PC-3 (cell line): ENCODE measurements at regions of chr9 and their contacts with region 1.

Region 1: GRCh38 chr9:5186416-5187169 is 1.2 kb upstream of the INSL6 start:
- DNase-seq: peak; percentile 71
- ATAC-seq: peak; percentile 83
- H3K4me3 ChIP-seq: no peak overlapping the region
- H3K27ac ChIP-seq: no peak overlapping the region
- H3K4me1 ChIP-seq: no peaks in the 10 kb centered on the region
- H3K27me3 ChIP-seq: no peaks in the 10 kb centered on the region
- CTCF ChIP-seq: peak; percentile 76

Region 2: DNA sequence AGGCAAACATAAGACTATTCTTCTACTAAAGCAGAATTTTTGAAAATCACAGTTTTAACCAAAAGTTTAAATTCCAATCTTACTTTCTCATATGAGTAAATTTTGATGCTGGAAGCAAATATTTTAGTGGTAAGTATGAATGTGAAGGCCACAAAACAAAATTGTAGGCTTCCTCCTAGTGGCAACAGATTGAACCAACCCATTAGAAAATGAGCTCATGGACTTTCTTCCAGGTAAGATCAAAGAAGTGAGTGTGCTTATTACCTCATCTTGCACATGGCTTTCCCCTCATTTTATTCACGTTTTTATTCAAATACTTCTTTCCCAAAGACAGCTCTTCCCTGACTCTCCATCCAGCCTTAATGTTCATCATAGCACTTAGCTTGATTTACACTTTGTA is 134.5 kb after region 1 on chr9:
- CTCF ChIA-PET with region 1: interaction called, 9 read pairs
- POLR2A ChIA-PET with region 1: no interaction called
- intact Hi-C with region 1: loop called (anchors 1 kb)
- DNase-seq: peak; percentile 29
- ATAC-seq: no peak
- H3K4me3 ChIP-seq: no peak overlapping the region
- H3K27ac ChIP-seq: no peak overlapping the region
- H3K4me1 ChIP-seq: no peaks in the 10 kb centered on the region
- H3K27me3 ChIP-seq: no peaks in the 10 kb centered on the region
- CTCF ChIP-seq: peak; percentile 41

Region 3: DNA sequence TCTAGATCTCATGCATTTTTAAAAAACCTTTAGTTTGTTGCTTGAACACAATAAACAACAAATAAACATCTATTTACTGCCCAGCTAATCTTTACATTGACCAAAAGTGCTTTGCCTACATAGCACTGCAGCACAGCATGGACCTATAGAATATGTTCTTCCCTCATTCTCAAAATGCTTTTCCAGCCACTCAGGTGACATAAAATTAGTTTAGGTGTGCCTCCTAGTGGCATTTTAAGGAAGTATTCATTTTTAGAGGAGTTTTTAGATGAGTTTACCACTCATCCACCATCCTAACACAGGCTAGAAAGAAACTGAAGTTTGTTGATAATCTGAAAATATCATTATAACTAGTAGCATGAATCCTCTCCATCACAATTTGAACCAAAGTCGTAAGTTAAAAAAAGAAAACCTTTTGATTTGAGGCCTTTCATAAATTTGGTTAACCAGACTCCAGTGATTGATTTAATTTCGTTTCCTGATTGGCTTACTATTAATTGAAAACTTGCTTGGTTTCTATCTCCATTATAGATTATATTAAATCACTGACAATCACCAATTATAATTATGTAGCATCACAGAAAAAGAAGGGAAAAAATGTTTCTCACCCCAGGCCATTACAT is 238.5 kb after region 1 on chr9:
- CTCF ChIA-PET with region 1: interaction called, 7 read pairs
- POLR2A ChIA-PET with region 1: no interaction called
- intact Hi-C with region 1: loop called (anchors 1 kb)
- DNase-seq: peak; percentile 63
- ATAC-seq: peak; percentile 38
- H3K4me3 ChIP-seq: no peak overlapping the region
- H3K27ac ChIP-seq: no peak overlapping the region
- H3K4me1 ChIP-seq: no peaks in the 10 kb centered on the region
- H3K27me3 ChIP-seq: no peaks in the 10 kb centered on the region
- CTCF ChIP-seq: peak; percentile 71